CD8-positive, alpha-beta T cell (primary cell): ENCODE measurements at regions of chr17 and their contacts with region 1.

Region 1: GRCh38 chr17:21493993-21494392 is 117.8 kb downstream of the KCNJ12 start:
- DNase-seq: no peak
- ATAC-seq: no peak
- H3K4me3 ChIP-seq: no peak overlapping the region
- H3K4me3 Mint-ChIP-seq: no peak overlapping the region
- H3K27ac ChIP-seq: no peak overlapping the region
- H3K27ac Mint-ChIP-seq: no peak overlapping the region
- H3K4me1 ChIP-seq: no peaks in the 10 kb centered on the region
- H3K4me1 Mint-ChIP-seq: no peaks in the 10 kb centered on the region
- H3K27me3 ChIP-seq: no peaks in the 10 kb centered on the region
- H3K27me3 Mint-ChIP-seq: peaks cover 2% of the 10 kb centered on the region
- CTCF ChIP-seq: no peak

Region 2: GRCh38 chr17:21233581-21234347 is 260.2 kb before region 1 on chr17:
- CTCF ChIA-PET with region 1: no interaction called
- POLR2A ChIA-PET with region 1: no interaction called
- intact Hi-C with region 1: loop called in 1 of 2 experiments (anchors 5 kb)
- DNase-seq: no peak
- ATAC-seq: no peak
- H3K4me3 ChIP-seq: no peak overlapping the region
- H3K4me3 Mint-ChIP-seq: no peak overlapping the region
- H3K27ac ChIP-seq: no peak overlapping the region
- H3K27ac Mint-ChIP-seq: no peak overlapping the region
- H3K4me1 ChIP-seq: no peaks in the 10 kb centered on the region
- H3K4me1 Mint-ChIP-seq: no peaks in the 10 kb centered on the region
- H3K27me3 ChIP-seq: no peaks in the 10 kb centered on the region
- H3K27me3 Mint-ChIP-seq: no peaks in the 10 kb centered on the region
- CTCF ChIP-seq: no peak

Region 3: GRCh38 chr17:21287596-21288449 is 206.2 kb before region 1 on chr17:
- CTCF ChIA-PET with region 1: no interaction called
- POLR2A ChIA-PET with region 1: no interaction called
- intact Hi-C with region 1: no loop called
- DNase-seq: peak; percentile 89 to 99 (median 95)
- ATAC-seq: peak; percentile 69
- H3K4me3 ChIP-seq: peak overlapping the region; percentile 78 to 81
- H3K4me3 Mint-ChIP-seq: peak overlapping the region; percentile 94
- H3K27ac ChIP-seq: peak overlapping the region; percentile 69 to 99
- H3K27ac Mint-ChIP-seq: peak overlapping the region; percentile 96
- H3K4me1 ChIP-seq: peaks cover 40% of the 10 kb centered on the region
- H3K4me1 Mint-ChIP-seq: peaks cover 54% of the 10 kb centered on the region
- H3K27me3 ChIP-seq: no peaks in the 10 kb centered on the region
- H3K27me3 Mint-ChIP-seq: no peaks in the 10 kb centered on the region
- CTCF ChIP-seq: no peak